ENCODE measurements at regions of chr16 and their contacts with region 1.

Region 1: GRCh38 chr16:56964243-56965148 is 2.7 kb downstream of the CETP start:
- DNase-seq: peak; percentile 36
- H3K4me3 ChIP-seq: no peak overlapping the region
- CTCF ChIP-seq: peak; percentile 76

Region 2: GRCh38 chr16:56950881-56951771 is 13.4 kb before region 1 on chr16:
- CTCF ChIA-PET with region 1: interaction called, 49 read pairs
- POLR2A ChIA-PET with region 1: no interaction called
- DNase-seq: no peak
- H3K4me3 ChIP-seq: no peak overlapping the region
- CTCF ChIP-seq: peak; percentile 87

Region 3: DNA sequence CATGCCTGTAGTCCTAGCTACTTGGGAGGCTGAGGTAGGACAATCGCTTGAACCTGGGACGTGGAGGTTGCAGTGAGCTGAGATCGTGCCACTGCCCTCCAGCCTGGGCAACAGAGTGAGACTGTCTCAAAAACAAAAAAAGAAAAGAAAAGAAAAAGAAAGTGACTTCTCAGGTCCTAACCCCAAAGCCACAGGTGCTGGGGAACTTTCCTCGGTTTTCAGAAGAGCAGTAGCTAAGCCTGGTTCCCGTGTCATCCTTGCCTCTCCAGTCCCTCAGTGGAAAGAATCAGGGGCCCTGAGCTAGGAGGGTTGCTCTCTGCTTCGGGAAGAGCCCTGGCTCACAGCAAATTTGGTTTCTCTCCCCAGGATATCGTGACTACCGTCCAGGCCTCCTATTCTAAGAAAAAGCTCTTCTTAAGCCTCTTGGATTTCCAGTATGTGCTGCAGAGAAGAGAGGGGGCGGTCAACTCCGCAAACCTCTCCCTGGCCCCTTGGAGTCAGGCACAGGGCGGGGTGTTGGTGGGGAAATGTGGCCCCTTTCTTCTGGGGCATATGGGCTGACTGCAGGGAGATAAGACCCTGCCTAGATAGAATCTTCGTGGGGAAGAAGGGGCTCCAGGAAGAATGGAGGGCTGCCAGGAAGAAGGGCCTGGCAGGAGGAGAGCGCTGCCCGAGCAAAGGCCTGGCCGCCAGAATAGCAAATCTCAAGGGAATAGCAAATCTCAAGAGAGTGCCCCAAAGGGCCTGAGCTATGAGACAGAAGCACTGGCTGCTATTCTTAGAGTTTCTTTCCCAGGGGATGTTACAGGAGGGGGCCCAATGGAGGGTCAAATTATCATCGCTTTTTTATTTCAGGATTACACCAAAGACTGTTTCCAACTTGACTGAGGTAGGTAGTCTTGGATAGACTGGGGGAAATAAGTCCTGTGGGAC is 16.6 kb after region 1 on chr16:
- CTCF ChIA-PET with region 1: interaction called, 40 read pairs
- POLR2A ChIA-PET with region 1: interaction called, 5 read pairs
- DNase-seq: no peak
- H3K4me3 ChIP-seq: no peak overlapping the region
- CTCF ChIP-seq: no peak

Region 4: GRCh38 chr16:57045694-57046381 is 81.3 kb after region 1 on chr16:
- CTCF ChIA-PET with region 1: interaction called, 28 read pairs
- POLR2A ChIA-PET with region 1: no interaction called
- DNase-seq: no peak
- H3K4me3 ChIP-seq: no peak overlapping the region
- CTCF ChIP-seq: peak; percentile 81

Measured in AG04449 (cell line).